Esophagus muscularis mucosa (tissue), 4 donors: ENCODE measurements at regions of chr16 and their contacts with region 1.

Region 1: GRCh38 chr16:84116720-84117493 is at the start of gene MBTPS1:
- DNase-seq: peak; percentile 98
- H3K4me3 ChIP-seq: peak within 1 kb of the TSS; percentile 80 to 99 (median 96)
- H3K27ac ChIP-seq: peak within 1 kb of the TSS; percentile 91 to 97 (median 96)
- H3K4me1 ChIP-seq: peaks cover 24 to 39% (median 30%) of the 10 kb centered on the region in 4 donors
- H3K27me3 ChIP-seq: no peaks in the 10 kb centered on the region
- CTCF ChIP-seq: peak in 1 of 3 experiments; percentile 42
- EP300 ChIP-seq: no peak
- POLR2A ChIP-seq: peak; percentile 45
- total RNA-seq, gene MBTPS1: 72.4 to 86.6 (median 82.6) TPM

Region 2: DNA sequence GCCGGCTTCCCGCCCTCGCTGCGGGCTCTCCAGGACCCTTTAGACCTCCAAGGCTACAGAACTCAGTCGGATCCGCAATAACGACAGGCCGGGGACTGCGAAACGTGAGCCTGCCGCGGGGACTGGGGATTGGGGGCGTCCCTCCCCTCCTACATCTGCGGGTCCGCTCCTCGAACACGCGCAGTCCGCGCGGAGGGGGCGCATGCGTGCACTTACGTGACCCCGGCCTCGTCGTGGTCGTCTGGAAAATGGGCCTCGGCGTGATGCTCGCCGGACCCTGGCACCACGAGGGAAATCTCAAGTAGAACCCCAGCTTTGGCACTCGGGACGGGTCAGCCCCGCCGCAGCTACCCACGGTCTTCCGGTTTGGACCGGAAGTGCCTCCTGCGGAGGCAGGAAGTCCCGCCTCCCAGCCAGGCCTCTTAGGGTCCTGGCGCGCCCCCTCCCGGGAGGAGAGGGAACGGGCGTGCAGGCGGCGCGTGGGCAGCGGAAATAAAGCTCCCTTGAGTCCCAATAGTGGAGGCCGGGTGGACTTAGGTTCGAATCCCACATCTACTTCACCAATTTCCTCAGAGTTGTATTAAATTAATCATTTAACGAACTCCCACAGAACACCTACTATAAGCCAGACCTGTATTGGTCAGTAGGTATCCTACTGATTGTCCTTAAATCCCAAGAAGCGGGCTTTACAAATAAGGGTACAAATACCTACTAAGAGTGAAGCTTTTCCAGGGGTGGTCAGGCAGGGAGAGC is 70.0 kb after region 1 on chr16 and contains the start of gene TAF1C:
- intact Hi-C with region 1: loop called (anchors 10 kb)
- DNase-seq: peak; percentile 97
- H3K4me3 ChIP-seq: peak within 1 kb of the TSS; percentile 79 to 88 (median 84)
- H3K27ac ChIP-seq: peak within 1 kb of the TSS; percentile 73 to 80 (median 78)
- H3K4me1 ChIP-seq: peaks cover 15 to 38% (median 38%) of the 10 kb centered on the region in 4 donors
- H3K27me3 ChIP-seq: no peaks in the 10 kb centered on the region
- CTCF ChIP-seq: peak; percentile 99
- EP300 ChIP-seq: no peak
- POLR2A ChIP-seq: no peak
- total RNA-seq, gene TAF1C: 15.6 to 39.6 (median 21.8) TPM